MCF 10A (cell line): ENCODE measurements at regions of chr2 and their contacts with region 1.

Region 1: DNA sequence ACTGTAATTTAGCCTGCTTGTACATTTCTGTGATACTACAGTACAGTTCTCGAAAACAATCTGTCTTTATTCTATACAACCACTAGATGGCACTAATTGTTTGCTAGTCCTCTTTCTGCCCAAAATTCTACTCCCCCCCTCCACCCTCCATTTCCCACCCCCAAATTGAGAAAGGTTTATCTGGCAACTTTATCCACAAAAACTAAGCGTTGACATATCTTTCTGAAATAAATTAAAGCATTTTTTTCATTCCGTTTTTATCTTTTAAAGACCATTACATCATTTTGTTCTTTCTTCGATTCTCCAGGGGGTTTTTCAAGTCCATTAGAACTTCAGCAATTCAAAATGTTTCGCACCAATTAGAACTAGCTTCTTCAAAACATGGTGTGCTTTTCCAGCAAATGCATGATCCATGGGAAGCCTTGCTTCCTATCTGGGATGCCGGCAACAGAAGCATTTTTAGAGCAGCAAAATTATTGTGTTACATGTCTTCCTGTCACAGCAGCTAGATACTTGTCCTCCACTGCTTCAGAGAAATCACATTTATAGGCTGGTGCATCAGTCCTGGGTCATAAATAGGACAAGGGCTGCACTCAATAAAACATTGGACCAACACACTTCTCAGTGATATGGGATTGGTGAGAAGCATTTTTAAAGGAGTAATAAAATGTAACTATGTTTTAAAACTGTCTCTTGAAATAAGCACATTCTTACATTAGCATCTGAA is 241.3 kb downstream of the PAX3 start:
- DNase-seq: no peak
- H3K4me3 Mint-ChIP-seq: no peak overlapping the region
- H3K27ac Mint-ChIP-seq: no peak overlapping the region
- H3K4me1 Mint-ChIP-seq: peaks cover 5% of the 10 kb centered on the region
- H3K27me3 Mint-ChIP-seq: peaks cover 81% of the 10 kb centered on the region
- CTCF ChIP-seq: peak; percentile 54

Region 2: DNA sequence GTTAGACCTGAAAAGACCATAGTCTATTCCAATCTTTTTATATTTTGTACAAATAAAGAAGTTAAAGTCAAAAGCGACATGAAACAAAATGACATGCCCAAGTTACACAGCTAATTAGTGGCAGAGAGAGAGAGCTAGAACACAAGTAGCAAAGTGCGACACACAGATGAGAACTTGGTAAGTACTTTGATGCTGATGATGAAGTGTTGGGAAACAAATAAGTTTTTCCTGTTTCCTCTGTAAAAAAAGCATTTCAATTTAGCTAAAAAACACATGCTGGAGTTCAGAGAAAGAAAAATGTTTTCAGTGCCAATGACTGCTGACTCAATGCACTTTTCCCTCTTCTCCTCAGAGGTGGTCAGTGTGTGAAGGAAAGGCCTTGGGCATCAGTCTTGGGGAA is 14.4 kb after region 1 on chr2:
- CTCF ChIA-PET with region 1: interaction called, 14 read pairs
- POLR2A ChIA-PET with region 1: no interaction called
- intact Hi-C with region 1: no loop called
- DNase-seq: no peak
- H3K4me3 Mint-ChIP-seq: no peak overlapping the region
- H3K27ac Mint-ChIP-seq: no peak overlapping the region
- H3K4me1 Mint-ChIP-seq: no peaks in the 10 kb centered on the region
- H3K27me3 Mint-ChIP-seq: peaks cover 87% of the 10 kb centered on the region
- CTCF ChIP-seq: no peak

Region 3: DNA sequence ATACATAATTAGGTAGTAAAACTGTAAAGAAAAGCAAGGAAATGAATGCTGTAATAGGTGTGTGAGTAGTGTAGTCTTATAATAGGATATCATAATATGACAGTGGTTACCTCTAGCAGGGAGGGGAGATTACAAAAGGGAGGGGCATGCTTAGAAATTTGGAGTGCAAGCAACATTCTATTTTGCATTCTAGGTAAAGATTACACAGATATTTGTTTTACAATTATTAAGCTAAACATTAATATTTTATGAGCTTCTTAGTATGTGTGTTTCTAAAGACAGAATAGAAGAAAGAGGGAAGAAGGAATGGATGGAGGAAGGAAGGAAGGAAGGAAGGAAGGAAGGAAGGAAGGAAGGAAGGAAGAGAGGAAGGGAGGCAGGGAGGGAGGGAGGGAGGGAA is 63.4 kb after region 1 on chr2:
- CTCF ChIA-PET with region 1: no interaction called
- POLR2A ChIA-PET with region 1: no interaction called
- intact Hi-C with region 1: no loop called
- DNase-seq: no peak
- H3K4me3 Mint-ChIP-seq: no peak overlapping the region
- H3K27ac Mint-ChIP-seq: no peak overlapping the region
- H3K4me1 Mint-ChIP-seq: no peaks in the 10 kb centered on the region
- H3K27me3 Mint-ChIP-seq: peaks cover 88% of the 10 kb centered on the region
- CTCF ChIP-seq: no peak

Region 4: DNA sequence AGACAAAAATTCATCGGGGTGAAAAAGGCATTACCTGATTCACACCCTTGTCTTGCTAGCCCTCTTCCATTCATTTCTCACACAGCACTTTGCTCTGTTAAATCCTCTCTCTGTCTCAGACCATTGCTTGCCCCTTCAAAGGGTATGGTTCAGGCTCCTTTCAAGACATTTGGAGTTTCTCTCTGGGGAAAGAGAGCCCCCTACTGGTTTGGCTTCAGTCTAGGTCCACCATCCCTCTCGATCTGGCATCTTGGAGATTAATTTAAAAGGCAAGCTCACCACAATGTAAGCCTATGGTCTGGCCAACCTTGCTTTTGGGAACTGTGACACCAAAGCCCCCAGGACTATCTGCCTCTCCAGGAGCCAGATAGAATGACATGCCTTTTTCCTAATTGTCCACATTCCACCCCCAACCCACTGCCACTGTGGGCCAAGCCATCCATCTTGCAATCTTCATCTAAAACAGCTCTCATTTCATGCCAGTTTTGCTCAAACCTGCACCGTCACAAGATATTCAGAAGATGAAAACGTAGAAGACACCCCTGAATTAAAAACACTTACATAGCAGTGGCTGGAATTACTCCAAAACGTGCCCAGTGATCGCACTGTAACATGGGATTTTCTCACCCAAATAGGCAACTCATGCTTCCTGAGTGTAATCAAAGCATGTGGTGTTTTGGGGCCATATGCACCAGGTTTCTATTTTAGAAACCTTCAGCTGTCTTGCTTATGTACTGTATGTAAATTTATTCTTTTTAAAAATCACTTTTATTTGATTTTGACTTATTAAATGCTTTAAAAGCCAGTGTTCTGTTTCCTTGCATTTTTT is 504.5 kb after region 1 on chr2:
- CTCF ChIA-PET with region 1: no interaction called
- POLR2A ChIA-PET with region 1: interaction called, 6 read pairs
- intact Hi-C with region 1: loop called (anchors 1 kb)
- DNase-seq: peak; percentile 78
- H3K4me3 Mint-ChIP-seq: no peak overlapping the region
- H3K27ac Mint-ChIP-seq: no peak overlapping the region
- H3K4me1 Mint-ChIP-seq: peaks cover 7% of the 10 kb centered on the region
- H3K27me3 Mint-ChIP-seq: no peaks in the 10 kb centered on the region
- CTCF ChIP-seq: peak; percentile 72

Region 5: DNA sequence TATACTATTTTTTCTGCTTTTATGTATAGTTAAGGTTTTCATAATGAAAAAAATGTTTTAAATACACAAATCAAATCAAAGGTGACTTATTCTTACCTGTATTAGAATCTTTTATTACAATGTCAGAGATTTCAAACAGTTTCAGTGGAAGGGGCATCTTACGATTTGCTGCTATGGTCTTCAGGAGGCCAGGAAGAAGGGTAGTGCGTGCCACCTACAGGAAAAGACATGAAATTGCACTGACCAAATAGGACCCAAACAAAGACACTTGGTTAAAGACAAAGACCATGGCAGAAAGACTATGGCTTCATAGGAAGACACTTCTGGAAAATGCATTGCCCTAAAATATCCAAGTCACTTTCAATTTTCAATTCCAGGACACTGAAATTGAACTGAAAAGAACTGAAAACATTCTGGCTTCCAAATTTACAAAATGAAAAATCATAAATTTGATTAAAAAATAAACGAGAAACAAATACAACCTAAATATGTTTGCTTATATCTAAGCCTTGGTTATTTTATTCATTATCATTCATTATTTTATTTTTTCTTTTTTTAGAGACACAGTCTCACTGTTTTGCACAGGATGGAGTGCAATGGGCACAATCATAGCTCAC is 556.3 kb after region 1 on chr2:
- CTCF ChIA-PET with region 1: interaction called, 12 read pairs
- POLR2A ChIA-PET with region 1: no interaction called
- intact Hi-C with region 1: loop called (anchors 1 kb)
- DNase-seq: peak; percentile 59
- H3K4me3 Mint-ChIP-seq: no peak overlapping the region
- H3K27ac Mint-ChIP-seq: no peak overlapping the region
- H3K4me1 Mint-ChIP-seq: no peaks in the 10 kb centered on the region
- H3K27me3 Mint-ChIP-seq: no peaks in the 10 kb centered on the region
- CTCF ChIP-seq: peak; percentile 69